SK-N-SH (cell line): ENCODE measurements at regions of chr2 and their contacts with region 1.

Region 1: GRCh38 chr2:223993621-223994232 is 36.5 kb downstream of the MRPL44 start:
- DNase-seq: peak; percentile 69
- H3K4me3 ChIP-seq: no peak overlapping the region; a peak in 1 of 4 replicates
- H3K27ac ChIP-seq: no peak overlapping the region
- H3K4me1 ChIP-seq: peaks cover 0 to 7% of the 10 kb centered on the region in 2 experiments; a peak in 2 of 4 replicates
- H3K27me3 ChIP-seq: no peaks in the 10 kb centered on the region
- CTCF ChIP-seq: peak; percentile 87
- EP300 ChIP-seq: no peak
- RAD21 ChIP-seq: peak; percentile 90

Region 2: DNA sequence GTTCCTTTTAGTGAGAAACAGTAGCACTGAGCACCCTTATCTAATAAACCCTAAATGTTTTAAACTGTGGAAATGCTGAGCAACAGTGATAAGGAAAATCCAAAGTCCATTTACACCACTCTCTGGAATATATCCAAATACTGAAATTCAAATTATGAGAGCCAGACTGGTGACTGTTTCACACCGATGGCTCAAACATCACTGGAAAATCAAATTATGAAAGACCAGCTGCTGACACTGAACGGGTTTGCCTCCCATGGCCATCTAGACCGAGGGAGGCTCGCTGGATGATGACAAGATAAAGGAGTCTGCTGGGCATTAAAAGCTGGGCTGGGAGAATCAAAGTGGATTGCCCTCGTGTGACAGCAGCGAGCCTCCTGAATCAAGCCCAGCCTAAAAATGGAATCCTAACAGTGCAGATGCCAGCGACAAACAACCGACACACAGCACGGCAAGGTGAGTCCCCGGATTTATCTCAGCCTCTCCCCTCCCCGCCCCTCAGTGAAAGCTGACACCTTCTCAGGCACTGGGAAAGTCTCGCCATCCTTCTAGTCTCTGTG is 15.1 kb after region 1 on chr2:
- CTCF ChIA-PET with region 1: interaction called, 85 read pairs
- POLR2A ChIA-PET with region 1: no interaction called
- DNase-seq: peak; percentile 85
- H3K4me3 ChIP-seq: no peak overlapping the region; a peak in 1 of 4 replicates
- H3K27ac ChIP-seq: peak overlapping the region in 1 of 2 experiments; percentile 95; a peak in 2 of 4 replicates
- H3K4me1 ChIP-seq: peaks cover 26 to 28% of the 10 kb centered on the region in 2 experiments; a peak in 3 of 4 replicates
- H3K27me3 ChIP-seq: no peaks in the 10 kb centered on the region
- CTCF ChIP-seq: no peak
- EP300 ChIP-seq: peak in 1 of 2 experiments; percentile 92; a peak in 2 of 4 replicates
- RAD21 ChIP-seq: peak; percentile 5; the same call in 1 of the 2 replicates

Region 3: DNA sequence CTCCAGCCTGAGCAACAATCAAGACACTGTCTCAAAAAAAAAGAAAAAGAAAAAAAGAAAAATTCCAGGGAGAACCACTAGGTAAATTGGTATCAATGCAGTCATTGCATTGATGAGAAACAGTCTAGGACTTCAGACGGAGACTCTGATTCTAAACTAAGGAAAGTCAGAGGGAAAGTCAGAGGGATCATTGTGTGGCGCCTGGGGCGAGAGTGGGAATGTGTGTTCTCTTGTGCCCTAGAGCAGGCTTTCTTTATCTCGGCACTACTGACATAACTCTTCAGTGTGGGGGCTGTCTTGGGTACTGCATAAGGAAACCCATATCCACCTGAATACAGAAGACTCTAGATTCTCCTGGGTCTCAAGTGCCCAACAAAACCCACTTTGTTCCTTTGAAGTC is 20.6 kb after region 1 on chr2:
- CTCF ChIA-PET with region 1: interaction called, 85 read pairs
- POLR2A ChIA-PET with region 1: no interaction called
- DNase-seq: no peak
- H3K4me3 ChIP-seq: no peak overlapping the region
- H3K27ac ChIP-seq: no peak overlapping the region
- H3K4me1 ChIP-seq: peaks cover 6 to 15% of the 10 kb centered on the region in 2 experiments; a peak in 2 of 4 replicates
- H3K27me3 ChIP-seq: no peaks in the 10 kb centered on the region
- CTCF ChIP-seq: no peak
- EP300 ChIP-seq: no peak
- RAD21 ChIP-seq: no peak

Region 4: DNA sequence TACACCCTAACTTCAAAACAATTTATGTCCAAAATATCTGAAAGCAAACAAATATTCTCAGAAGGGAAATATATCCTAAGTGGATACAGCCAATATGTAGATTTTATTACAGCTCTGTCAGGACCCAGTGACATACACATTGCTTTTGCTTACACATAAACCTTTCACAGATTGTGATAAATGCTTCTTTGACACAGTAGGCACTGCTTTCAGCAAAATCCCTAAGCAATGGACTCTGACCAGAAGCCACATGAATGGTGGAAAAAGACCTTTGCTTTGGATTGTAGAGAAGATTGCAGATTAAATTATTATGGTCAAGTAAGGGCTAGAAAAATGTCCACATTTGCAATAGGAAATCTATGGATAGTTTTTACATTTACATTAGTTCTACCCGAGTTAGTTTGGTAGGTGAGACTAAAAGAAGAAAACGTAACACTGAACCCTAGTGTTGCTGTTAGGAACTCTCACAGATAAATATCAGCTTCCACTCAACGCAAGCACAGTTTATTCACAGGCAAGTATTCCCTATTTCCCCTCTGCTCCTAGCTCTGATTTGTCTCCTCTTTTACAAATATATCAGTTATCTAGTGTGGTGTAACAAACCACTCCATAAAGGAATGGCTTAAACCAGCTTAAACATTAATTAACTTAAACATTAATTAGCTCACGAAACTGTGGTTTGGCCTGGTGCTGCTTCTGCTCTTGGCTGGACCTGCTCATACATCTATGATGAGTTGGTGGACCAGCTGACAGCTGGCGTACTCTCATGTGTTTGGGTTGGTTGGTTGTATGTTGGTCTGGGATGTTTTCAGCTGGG is 69.0 kb after region 1 on chr2:
- CTCF ChIA-PET with region 1: interaction called, 17 read pairs
- POLR2A ChIA-PET with region 1: no interaction called
- DNase-seq: no peak
- H3K4me3 ChIP-seq: no peak overlapping the region
- H3K27ac ChIP-seq: no peak overlapping the region
- H3K4me1 ChIP-seq: no peaks in the 10 kb centered on the region; a peak in 1 of 4 replicates
- H3K27me3 ChIP-seq: no peaks in the 10 kb centered on the region
- CTCF ChIP-seq: no peak
- EP300 ChIP-seq: no peak
- RAD21 ChIP-seq: peak; percentile 34; the same call in 1 of the 2 replicates

Region 5: GRCh38 chr2:224069172-224069571 is 75.4 kb after region 1 on chr2:
- CTCF ChIA-PET with region 1: interaction called, 17 read pairs
- POLR2A ChIA-PET with region 1: no interaction called
- DNase-seq: no peak
- H3K4me3 ChIP-seq: no peak overlapping the region
- H3K27ac ChIP-seq: no peak overlapping the region
- H3K4me1 ChIP-seq: no peaks in the 10 kb centered on the region
- H3K27me3 ChIP-seq: no peaks in the 10 kb centered on the region
- CTCF ChIP-seq: no peak
- EP300 ChIP-seq: no peak
- RAD21 ChIP-seq: no peak

Region 6: DNA sequence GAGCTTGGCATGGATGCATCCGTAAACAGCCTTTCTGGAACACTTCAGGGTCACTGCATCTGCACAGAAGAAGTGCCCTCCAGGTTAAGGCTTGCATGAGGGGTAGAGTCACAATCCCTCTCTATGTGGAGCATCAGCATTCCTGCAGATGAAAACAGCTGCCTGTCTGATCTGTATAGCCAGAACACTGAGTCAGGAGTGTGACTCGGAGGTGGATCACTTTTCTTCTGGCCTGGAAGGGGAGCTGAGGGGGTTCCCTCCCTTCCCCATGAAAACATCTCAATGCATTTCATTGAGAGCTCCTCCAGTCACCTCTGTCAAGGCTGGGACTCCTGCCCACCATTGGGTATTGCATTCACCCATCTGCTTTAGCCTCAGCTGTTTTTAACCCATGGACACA is 117.8 kb after region 1 on chr2:
- CTCF ChIA-PET with region 1: interaction called, 11 read pairs
- POLR2A ChIA-PET with region 1: no interaction called
- DNase-seq: no peak
- H3K4me3 ChIP-seq: no peak overlapping the region
- H3K27ac ChIP-seq: no peak overlapping the region
- H3K4me1 ChIP-seq: no peaks in the 10 kb centered on the region
- H3K27me3 ChIP-seq: no peaks in the 10 kb centered on the region
- CTCF ChIP-seq: no peak
- EP300 ChIP-seq: no peak
- RAD21 ChIP-seq: no peak

Region 7: GRCh38 chr2:224284134-224284946 is 290.6 kb after region 1 on chr2:
- CTCF ChIA-PET with region 1: interaction called, 439 read pairs
- POLR2A ChIA-PET with region 1: interaction called, 5 read pairs
- DNase-seq: peak; percentile 12
- H3K4me3 ChIP-seq: no peak overlapping the region; a peak in 1 of 4 replicates
- H3K27ac ChIP-seq: no peak overlapping the region
- H3K4me1 ChIP-seq: peaks cover 0 to 2% of the 10 kb centered on the region in 2 experiments; a peak in 1 of 4 replicates
- H3K27me3 ChIP-seq: no peaks in the 10 kb centered on the region
- CTCF ChIP-seq: peak; percentile 93
- EP300 ChIP-seq: no peak
- RAD21 ChIP-seq: peak; percentile 79